ENCODE measurements at regions of chr1 and their contacts with region 1.

Region 1: GRCh38 chr1:59128784-59129227 is 168.1 kb upstream of the FGGY start:
- DNase-seq: no peak
- H3K4me3 Mint-ChIP-seq: no peak overlapping the region
- H3K27ac Mint-ChIP-seq: no peak overlapping the region
- H3K4me1 Mint-ChIP-seq: peaks cover 27% of the 10 kb centered on the region
- H3K27me3 Mint-ChIP-seq: peaks cover 4% of the 10 kb centered on the region

Region 2: GRCh38 chr1:59071289-59071688 is 57.5 kb before region 1 on chr1:
- intact Hi-C with region 1: loop called (anchors 5 kb)
- DNase-seq: no peak
- H3K4me3 Mint-ChIP-seq: peak overlapping the region; percentile 7
- H3K27ac Mint-ChIP-seq: peak overlapping the region; percentile 50
- H3K4me1 Mint-ChIP-seq: peaks cover 23% of the 10 kb centered on the region
- H3K27me3 Mint-ChIP-seq: no peaks in the 10 kb centered on the region

Region 3: GRCh38 chr1:59143133-59143487 is 14.3 kb after region 1 on chr1:
- intact Hi-C with region 1: loop called (anchors 2 kb)
- DNase-seq: no peak
- H3K4me3 Mint-ChIP-seq: no peak overlapping the region
- H3K27ac Mint-ChIP-seq: peak overlapping the region; percentile 62
- H3K4me1 Mint-ChIP-seq: peaks cover 59% of the 10 kb centered on the region
- H3K27me3 Mint-ChIP-seq: no peaks in the 10 kb centered on the region